Endothelial cell of umbilical vein (primary cell): ENCODE measurements at regions of chr11 and their contacts with region 1.

Region 1: GRCh38 chr11:94325681-94326080 is 21.3 kb downstream of the IZUMO1R start:
- DNase-seq: peak; percentile 44
- H3K4me3 ChIP-seq: no peak overlapping the region
- H3K27ac ChIP-seq: no peak overlapping the region
- H3K4me1 ChIP-seq: no peaks in the 10 kb centered on the region
- H3K27me3 ChIP-seq: no peaks in the 10 kb centered on the region
- CTCF ChIP-seq: peak; percentile 33 to 63
- POLR2A ChIP-seq: no peak

Region 2: DNA sequence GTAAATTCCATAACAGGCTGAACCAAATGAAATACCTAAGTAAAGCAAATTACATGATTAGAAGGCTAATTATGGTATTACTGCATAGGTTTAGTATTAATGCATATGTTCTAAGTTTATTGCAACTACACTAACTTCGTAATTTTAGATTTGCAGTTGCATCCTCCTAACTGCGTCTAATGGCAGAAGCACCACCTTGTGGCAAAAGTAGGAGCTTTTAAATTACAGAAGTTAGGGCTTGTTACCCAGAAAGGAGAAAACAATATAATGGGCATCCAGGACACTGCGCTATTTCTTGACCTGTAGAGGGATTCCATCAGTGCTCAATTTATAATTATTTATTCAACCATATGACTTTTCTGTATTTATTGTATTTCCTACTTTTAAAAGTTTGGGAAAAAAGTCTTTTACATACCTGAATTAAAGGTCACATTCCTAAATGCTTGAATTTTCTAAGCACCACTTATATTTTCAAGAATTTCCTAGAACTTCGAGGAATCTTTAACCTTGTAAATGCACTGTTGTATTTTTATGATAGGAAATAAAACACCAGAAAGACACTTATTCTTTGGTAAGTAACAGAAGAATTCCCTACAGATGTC is 91.8 kb after region 1 on chr11:
- CTCF ChIA-PET with region 1: no interaction called
- POLR2A ChIA-PET with region 1: no interaction called
- dilution Hi-C with region 1: no loop called
- intact Hi-C with region 1: loop called (anchors 10 kb)
- DNase-seq: peak; percentile 32
- H3K4me3 ChIP-seq: no peak overlapping the region
- H3K27ac ChIP-seq: no peak overlapping the region
- H3K4me1 ChIP-seq: no peaks in the 10 kb centered on the region
- H3K27me3 ChIP-seq: no peaks in the 10 kb centered on the region
- CTCF ChIP-seq: peak; percentile 15 to 24
- POLR2A ChIP-seq: no peak

Region 3: DNA sequence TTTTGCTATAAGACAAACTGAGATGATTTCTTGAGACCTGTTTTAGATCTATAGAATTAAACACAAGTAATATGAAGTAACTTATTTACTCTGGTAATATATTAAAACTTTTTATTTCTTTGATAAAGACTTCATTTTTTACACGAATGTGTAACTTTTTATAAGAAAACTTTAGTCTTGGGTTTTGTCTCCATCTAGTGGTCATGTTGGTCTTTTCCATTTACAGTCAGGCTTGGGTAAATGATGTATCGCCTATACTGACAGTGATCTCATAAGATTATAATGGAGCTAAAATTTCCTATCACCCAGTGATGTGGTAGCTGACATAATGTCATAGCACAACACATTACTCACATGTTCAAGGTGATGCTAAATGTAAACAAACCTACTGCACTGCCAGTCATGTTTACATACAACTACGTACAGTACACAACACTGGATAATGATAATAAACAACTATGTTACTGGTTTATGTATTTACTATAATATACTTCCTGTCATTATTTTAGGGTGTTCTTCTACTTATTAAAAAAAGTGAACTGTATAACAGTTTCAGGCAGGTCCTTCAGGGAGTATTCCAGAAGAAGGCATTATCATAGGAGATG is 179.1 kb after region 1 on chr11:
- CTCF ChIA-PET with region 1: interaction called, 4 read pairs
- POLR2A ChIA-PET with region 1: no interaction called
- dilution Hi-C with region 1: no loop called
- intact Hi-C with region 1: loop called (anchors 1 kb)
- DNase-seq: peak; percentile 66
- H3K4me3 ChIP-seq: no peak overlapping the region
- H3K27ac ChIP-seq: no peak overlapping the region
- H3K4me1 ChIP-seq: no peaks in the 10 kb centered on the region
- H3K27me3 ChIP-seq: peaks cover 0 to 2% of the 10 kb centered on the region in 2 experiments
- CTCF ChIP-seq: peak; percentile 33 to 40
- POLR2A ChIP-seq: no peak